ENCODE measurements at regions of chr10 and their contacts with region 1.

Region 1: DNA sequence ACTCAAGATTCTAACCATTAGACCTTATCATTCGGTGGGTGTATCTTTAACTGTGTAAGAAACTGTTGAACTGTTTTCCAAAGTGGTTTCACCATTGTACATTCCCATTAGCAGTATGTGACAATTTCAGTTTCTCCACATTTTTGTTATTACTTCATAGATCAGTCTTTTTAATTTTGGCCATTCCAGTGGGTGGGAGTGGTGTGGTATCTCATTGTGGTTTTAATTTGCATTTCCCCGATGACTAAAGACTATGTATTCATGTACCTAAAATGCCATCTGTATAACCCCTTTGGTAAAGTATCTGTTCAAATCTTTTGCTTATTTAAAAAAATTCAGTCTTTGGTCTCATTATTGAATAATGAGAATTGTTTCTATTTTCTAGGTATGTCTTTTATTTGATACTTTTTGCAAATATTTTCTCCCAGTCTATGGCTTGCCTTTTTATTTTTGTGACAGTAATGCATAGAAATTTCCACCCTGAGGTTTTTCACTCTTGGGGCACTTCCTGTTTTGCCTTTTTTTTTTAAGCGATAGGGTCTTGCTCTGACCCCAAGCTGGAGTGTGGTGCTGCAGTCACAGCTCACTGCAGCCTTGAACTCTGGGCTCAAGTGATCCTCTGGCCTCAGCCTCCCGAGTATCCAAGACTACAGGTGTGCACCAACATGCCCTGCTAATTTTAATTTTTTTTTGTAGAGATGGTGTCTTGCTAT is 141.1 kb upstream of the ITGB1 start:
- DNase-seq: no peak
- H3K4me3 Mint-ChIP-seq: no peak overlapping the region
- H3K27ac Mint-ChIP-seq: peak overlapping the region; percentile 57
- H3K4me1 Mint-ChIP-seq: peaks cover 27% of the 10 kb centered on the region
- H3K27me3 Mint-ChIP-seq: no peaks in the 10 kb centered on the region

Region 2: DNA sequence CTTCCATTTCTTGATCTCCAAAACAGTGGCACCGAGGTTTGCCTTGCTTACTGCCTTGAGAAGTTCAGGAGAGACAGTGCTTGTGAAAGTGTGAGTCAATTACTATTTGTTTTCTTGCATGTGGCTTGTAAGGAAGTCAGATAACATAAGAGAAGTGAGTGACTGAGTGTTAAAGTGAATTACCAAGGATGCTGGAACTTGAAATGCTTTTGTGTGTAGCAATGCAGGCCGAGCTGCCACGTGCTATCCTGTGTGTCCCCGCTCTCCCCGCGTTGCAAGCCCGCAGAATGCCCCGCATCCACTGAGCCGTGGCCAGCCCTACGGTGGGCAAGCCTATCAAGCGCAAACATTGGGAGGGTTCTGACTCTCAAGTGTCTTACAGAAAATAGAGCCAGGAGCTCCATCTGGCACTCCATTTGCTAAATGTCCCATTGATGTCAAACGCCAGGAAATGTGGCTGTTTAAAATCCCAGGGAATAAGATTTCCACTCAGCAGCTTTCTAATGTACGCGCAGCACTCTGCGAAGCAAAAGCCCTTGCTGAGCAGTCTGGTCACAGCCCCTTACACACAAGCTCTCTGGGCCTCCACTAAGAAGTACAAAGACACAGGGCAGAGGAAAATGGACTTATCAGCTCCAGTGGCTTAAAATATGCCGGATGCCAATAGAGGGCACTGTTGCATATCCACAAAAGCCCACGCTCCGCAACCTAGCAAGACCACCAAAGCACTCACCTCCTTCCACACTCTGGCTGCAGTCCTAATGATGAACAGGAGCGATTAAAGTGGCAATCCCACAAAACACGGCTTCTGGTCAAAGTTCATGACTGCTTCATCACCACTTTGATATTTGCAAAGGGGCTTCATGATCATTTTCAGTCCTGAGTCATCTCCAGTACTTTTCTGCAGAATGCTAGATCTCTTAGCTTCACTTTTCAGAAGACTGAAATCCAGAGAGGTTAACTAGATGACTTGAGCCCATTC is 16.9 kb after region 1 on chr10:
- CTCF ChIA-PET with region 1: interaction called, 34 read pairs
- POLR2A ChIA-PET with region 1: no interaction called
- DNase-seq: no peak
- H3K4me3 Mint-ChIP-seq: peak overlapping the region; percentile 44
- H3K27ac Mint-ChIP-seq: peak overlapping the region; percentile 83
- H3K4me1 Mint-ChIP-seq: peaks cover 76% of the 10 kb centered on the region
- H3K27me3 Mint-ChIP-seq: no peaks in the 10 kb centered on the region

Measured in activated CD4-positive, alpha-beta T cell treated with anti-CD3 and anti-CD28 coated beads, Interleukin-2, amount 10 ng/mL, durations not matched to agents 7 days and 5 days (primary cell).